Activated naive CD4-positive, alpha-beta T cell treated with anti-CD3 and anti-CD28 coated beads for 36 hours (primary cell): ENCODE measurements at regions of chr12 and their contacts with region 1.

Region 1: GRCh38 chr12:127381048-127381668 is 885.8 kb upstream of the TMEM132C start:
- DNase-seq: peak; percentile 31
- H3K4me3 Mint-ChIP-seq: no peak overlapping the region
- H3K27ac Mint-ChIP-seq: no peak overlapping the region
- H3K4me1 Mint-ChIP-seq: peaks cover 2% of the 10 kb centered on the region
- H3K27me3 Mint-ChIP-seq: peaks cover 9% of the 10 kb centered on the region

Region 2: GRCh38 chr12:126784328-126784921 is 596.7 kb before region 1 on chr12:
- CTCF ChIA-PET with region 1: interaction called, 3 read pairs
- intact Hi-C with region 1: loop called (anchors 10 kb)
- DNase-seq: peak; percentile 32
- H3K4me3 Mint-ChIP-seq: no peak overlapping the region
- H3K27ac Mint-ChIP-seq: no peak overlapping the region
- H3K4me1 Mint-ChIP-seq: no peaks in the 10 kb centered on the region
- H3K27me3 Mint-ChIP-seq: peaks cover 2% of the 10 kb centered on the region

Region 3: DNA sequence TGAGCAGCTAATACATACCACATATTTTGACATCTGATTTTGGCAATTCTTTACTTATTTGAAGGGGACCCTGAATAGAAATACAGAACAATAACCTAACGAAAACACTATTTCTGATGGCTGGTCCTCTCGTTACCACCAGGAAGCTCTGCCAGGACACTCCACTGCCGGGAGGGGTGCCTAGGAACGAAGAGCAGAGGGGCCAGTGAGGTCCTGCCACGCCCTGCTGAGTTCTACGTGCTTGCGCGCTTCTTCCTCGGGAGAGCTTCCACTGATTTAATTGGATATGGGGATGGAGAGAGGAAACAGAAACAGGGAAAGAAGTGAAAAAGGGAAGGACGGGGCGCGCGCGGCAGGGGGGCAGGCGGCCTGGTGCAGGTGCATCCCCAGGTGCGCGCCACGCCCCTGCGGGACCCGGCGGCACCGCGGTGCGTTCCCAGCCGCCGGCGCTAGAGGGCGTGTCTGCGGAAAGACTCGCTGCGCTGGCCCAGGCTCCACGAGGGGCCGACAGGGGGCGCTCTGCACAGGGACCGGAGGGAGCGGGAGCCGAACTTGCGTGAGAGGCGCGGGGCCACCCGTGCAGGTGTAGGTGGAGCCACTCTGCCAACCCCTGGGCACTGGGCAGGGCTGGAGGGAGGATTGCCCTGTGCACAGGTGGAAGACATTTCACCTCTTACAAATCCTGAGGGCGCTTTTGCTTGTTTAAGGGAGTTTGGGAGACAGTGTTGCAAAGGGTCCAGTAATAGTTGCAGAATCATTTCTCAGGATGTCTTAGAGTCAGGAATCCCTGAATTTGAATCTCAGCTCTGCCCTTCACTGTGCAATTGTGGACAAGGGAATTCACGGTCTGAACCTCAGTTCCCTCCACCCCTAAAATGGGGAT is 100.5 kb before region 1 on chr12:
- CTCF ChIA-PET with region 1: interaction called, 3 read pairs
- intact Hi-C with region 1: loop called (anchors 1 kb)
- DNase-seq: peak; percentile 77
- H3K4me3 Mint-ChIP-seq: no peak overlapping the region
- H3K27ac Mint-ChIP-seq: no peak overlapping the region
- H3K4me1 Mint-ChIP-seq: no peaks in the 10 kb centered on the region
- H3K27me3 Mint-ChIP-seq: peaks cover 25% of the 10 kb centered on the region

Region 4: GRCh38 chr12:127355061-127355841 is 25.9 kb before region 1 on chr12:
- CTCF ChIA-PET with region 1: no interaction called
- intact Hi-C with region 1: no loop called
- DNase-seq: no peak
- H3K4me3 Mint-ChIP-seq: no peak overlapping the region
- H3K27ac Mint-ChIP-seq: no peak overlapping the region
- H3K4me1 Mint-ChIP-seq: no peaks in the 10 kb centered on the region
- H3K27me3 Mint-ChIP-seq: peaks cover 7% of the 10 kb centered on the region